ENCODE measurements at regions of chr1 and their contacts with region 1.

Region 1: DNA sequence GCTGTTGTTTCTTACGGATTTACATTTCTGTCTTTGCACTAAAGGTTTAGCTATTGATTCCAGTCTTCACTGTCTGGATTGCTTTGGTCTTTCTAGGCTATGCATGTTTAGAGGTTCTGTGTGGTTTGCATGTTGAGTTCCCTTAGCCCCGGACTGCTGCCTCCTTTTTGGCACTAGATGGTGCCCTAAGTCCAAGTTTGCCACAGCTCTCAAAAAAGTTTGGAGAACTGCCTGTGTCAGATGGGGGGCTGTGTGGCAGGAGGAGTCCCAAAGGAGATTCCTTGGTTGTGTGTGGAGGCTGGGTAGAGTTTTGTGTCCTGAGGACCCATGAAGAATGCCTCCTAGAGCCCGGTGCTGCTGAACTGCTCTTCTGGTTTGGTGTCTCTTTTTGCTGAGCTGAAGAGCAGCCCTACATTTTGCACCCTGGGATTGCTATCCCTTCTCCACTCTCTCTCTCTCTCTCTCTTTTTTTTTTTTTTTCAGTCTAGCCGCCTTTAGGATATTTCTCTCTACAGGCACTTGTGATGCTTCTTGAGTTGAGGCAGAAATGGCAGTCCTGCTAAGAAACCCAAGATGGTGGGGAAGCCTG is 74.4 kb downstream of the PTGS2 start:
- DNase-seq: no peak
- ATAC-seq: peak; percentile 89
- H3K4me3 ChIP-seq: no peak overlapping the region
- H3K27ac ChIP-seq: no peak overlapping the region
- H3K4me1 ChIP-seq: no peaks in the 10 kb centered on the region
- H3K27me3 ChIP-seq: no peaks in the 10 kb centered on the region; a peak in 1 of 4 replicates
- CTCF ChIP-seq: peak; percentile 66 to 83 (median 70)
- EP300 ChIP-seq: no peak
- POLR2A ChIP-seq: no peak
- RAD21 ChIP-seq: peak; percentile 92

Region 2: GRCh38 chr1:186404454-186405051 is 201.3 kb before region 1 on chr1:
- CTCF ChIA-PET with region 1: interaction called, 3 read pairs
- POLR2A ChIA-PET with region 1: no interaction called
- RAD21 ChIA-PET with region 1: interaction called, 5 read pairs
- SMC1A ChIA-PET with region 1: interaction called, 4 read pairs
- in situ Hi-C with region 1: no loop called
- intact Hi-C with region 1: loop called (anchors 10 kb)
- DNase-seq: no peak
- ATAC-seq: peak; percentile 72
- H3K4me3 ChIP-seq: no peak overlapping the region
- H3K27ac ChIP-seq: no peak overlapping the region
- H3K4me1 ChIP-seq: no peaks in the 10 kb centered on the region
- H3K27me3 ChIP-seq: no peaks in the 10 kb centered on the region
- CTCF ChIP-seq: peak; percentile 58 to 65 (median 60)
- EP300 ChIP-seq: no peak
- POLR2A ChIP-seq: no peak
- RAD21 ChIP-seq: peak; percentile 72

Region 3: DNA sequence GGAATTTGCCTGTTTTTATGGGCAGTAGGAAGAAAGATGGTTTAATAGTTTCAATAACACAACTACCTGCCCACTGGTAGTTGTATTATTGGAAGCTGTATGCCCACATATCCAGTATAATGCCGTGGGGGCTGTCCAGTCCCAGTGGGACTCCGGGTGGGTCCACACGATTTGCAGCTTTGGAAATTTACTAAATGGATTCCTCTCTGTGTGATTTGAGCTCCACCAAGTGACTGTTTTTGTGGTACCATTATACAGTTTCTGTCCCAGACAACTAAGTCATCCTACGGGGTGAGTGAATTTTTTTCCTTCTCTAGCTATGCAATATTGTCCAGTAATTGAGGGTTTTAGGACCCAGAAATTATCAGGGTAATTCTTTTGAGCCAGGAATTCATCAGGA is 309.7 kb after region 1 on chr1:
- CTCF ChIA-PET with region 1: interaction called, 3 read pairs
- POLR2A ChIA-PET with region 1: no interaction called
- RAD21 ChIA-PET with region 1: no interaction called
- SMC1A ChIA-PET with region 1: no interaction called
- in situ Hi-C with region 1: no loop called
- intact Hi-C with region 1: loop called (anchors 5 kb)
- DNase-seq: no peak
- ATAC-seq: no peak
- H3K4me3 ChIP-seq: no peak overlapping the region
- H3K27ac ChIP-seq: no peak overlapping the region
- H3K4me1 ChIP-seq: no peaks in the 10 kb centered on the region
- H3K27me3 ChIP-seq: no peaks in the 10 kb centered on the region; a peak in 1 of 4 replicates
- CTCF ChIP-seq: 0 out of 6 replicates have a peak, but pooled peaks of 1 of the 3 experiments have one; percentile 5
- EP300 ChIP-seq: no peak
- POLR2A ChIP-seq: no peak
- RAD21 ChIP-seq: peak; percentile 33; the same call in 1 of the 2 replicates

Measured in GM12878 (cell line).